IMR-90 (cell line): ENCODE measurements at regions of chr3 and their contacts with region 1.

Region 1: DNA sequence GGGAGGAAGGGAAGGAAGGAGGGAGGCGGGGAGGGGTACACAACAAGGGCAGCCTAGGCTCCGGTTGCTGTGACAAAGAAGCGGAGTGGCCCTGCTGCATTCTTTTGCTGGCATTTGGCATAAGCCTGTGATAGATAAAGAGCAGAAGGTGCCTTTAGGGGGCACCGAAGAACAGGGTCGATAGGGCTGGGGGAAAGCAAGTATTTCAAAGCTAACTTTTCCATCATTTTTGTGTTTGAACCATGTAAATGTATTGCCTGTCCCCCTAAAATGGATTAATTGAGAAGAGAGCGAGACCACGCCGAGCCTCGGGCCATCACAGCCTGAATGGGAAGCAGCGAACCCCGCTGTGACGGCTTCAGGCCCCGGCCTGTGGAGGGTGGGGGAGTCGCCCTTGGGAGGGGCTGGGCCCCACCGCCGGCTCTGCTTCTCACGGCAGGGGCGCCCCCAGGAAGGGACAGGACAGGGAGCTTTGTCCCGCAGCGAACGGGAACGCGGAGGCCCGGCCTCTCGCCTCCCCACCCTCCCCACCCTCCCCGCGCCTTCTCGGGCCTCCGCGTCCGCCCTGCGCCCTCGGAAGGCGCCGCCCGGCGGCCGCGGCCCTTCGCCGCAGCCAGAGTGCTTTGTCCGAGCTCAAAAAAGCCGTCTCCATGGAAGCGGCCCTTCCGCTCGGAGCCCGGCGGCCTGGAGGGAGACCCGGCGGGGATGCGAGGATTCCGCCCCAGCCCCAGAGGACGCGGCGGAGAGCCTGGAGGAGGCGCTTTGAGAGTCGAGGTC is 32.4 kb upstream of the ALDH1L1 start:
- DNase-seq: peak; percentile 12
- ATAC-seq: peak; percentile 69
- H3K4me3 ChIP-seq: peak overlapping the region; percentile 10; the same call in 1 of the 2 replicates
- H3K27ac ChIP-seq: no peak overlapping the region
- H3K4me1 ChIP-seq: peaks cover 7% of the 10 kb centered on the region
- H3K27me3 ChIP-seq: peaks cover 9% of the 10 kb centered on the region; the same call in 1 of the 2 replicates
- CTCF ChIP-seq: 0 out of 2 replicates have a peak, but pooled peaks have one; percentile 15
- POLR2A ChIP-seq: no peak
- RAD21 ChIP-seq: no peak

Region 2: GRCh38 chr3:126197854-126198584 is 14.8 kb before region 1 on chr3:
- CTCF ChIA-PET with region 1: interaction called, 11 read pairs
- POLR2A ChIA-PET with region 1: interaction called, 3 read pairs
- dilution Hi-C with region 1: no loop called
- in situ Hi-C with region 1: no loop called
- intact Hi-C with region 1: no loop called
- DNase-seq: peak; percentile 60
- ATAC-seq: peak; percentile 95
- H3K4me3 ChIP-seq: no peak overlapping the region
- H3K27ac ChIP-seq: no peak overlapping the region
- H3K4me1 ChIP-seq: no peaks in the 10 kb centered on the region
- H3K27me3 ChIP-seq: peaks cover 10% of the 10 kb centered on the region
- CTCF ChIP-seq: peak; percentile 72
- POLR2A ChIP-seq: no peak
- RAD21 ChIP-seq: peak; percentile 70

Region 3: DNA sequence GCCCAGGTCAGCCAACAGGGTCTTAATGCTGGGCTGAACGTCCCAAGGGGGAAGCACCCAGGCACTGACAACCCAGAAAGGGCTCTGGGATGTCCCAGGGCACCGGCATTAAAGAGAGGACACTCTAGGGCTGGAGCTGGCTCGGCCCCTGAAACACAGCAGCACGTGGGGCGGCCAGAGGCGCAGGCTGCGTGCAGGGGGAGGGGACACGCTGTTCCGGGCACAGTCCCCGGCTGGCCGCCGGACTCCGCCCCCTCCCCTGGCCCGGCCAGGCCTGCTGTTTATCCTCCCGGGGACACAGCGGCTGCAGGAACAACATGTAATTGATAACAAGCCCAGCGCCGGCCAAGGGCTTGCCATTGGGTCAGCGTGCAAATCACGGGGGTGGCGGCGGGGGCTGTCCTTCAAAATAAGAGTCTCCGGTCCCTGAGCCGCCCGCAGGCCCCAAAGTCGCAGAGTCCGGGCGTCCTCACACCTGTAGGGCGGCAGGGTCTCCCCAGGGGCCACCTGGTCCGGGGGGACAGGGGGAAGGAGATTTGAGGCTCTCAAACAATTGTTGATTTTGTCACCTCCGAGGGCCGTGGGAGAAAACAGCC is 143.1 kb after region 1 on chr3:
- CTCF ChIA-PET with region 1: no interaction called
- POLR2A ChIA-PET with region 1: no interaction called
- dilution Hi-C with region 1: no loop called
- in situ Hi-C with region 1: no loop called
- intact Hi-C with region 1: loop called (anchors 1 kb)
- DNase-seq: peak; percentile 52
- ATAC-seq: peak; percentile 73
- H3K4me3 ChIP-seq: peak overlapping the region; percentile 33
- H3K27ac ChIP-seq: no peak overlapping the region
- H3K4me1 ChIP-seq: peaks cover 3% of the 10 kb centered on the region; the same call in 1 of the 2 replicates
- H3K27me3 ChIP-seq: peaks cover 28% of the 10 kb centered on the region
- CTCF ChIP-seq: no peak
- POLR2A ChIP-seq: no peak
- RAD21 ChIP-seq: no peak

Region 4: DNA sequence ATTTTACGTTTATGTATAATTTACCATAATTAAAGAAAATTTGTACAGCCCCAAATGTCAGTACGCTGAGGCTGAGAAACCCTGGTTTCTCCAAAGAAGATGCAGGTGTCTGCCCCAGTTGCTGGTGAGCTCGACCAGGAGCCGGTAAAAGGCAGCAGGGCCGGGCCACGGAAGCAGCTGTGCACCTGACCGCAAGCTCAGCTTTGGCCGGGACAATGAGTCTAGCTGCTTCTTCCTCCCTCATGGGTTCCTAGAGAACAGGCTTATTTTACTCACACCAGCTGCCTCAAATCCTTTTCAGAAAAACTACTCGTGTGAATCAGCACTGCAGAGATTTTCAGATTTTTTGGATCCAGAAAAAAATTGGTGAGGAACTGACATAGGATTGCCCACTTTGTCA is 280.9 kb after region 1 on chr3:
- CTCF ChIA-PET with region 1: no interaction called
- POLR2A ChIA-PET with region 1: no interaction called
- dilution Hi-C with region 1: no loop called
- in situ Hi-C with region 1: no loop called
- intact Hi-C with region 1: no loop called
- DNase-seq: no peak
- ATAC-seq: no peak
- H3K4me3 ChIP-seq: no peak overlapping the region
- H3K27ac ChIP-seq: no peak overlapping the region
- H3K4me1 ChIP-seq: no peaks in the 10 kb centered on the region
- H3K27me3 ChIP-seq: peaks cover 33% of the 10 kb centered on the region; the same call in 1 of the 2 replicates
- CTCF ChIP-seq: no peak
- POLR2A ChIP-seq: no peak
- RAD21 ChIP-seq: no peak

Region 5: DNA sequence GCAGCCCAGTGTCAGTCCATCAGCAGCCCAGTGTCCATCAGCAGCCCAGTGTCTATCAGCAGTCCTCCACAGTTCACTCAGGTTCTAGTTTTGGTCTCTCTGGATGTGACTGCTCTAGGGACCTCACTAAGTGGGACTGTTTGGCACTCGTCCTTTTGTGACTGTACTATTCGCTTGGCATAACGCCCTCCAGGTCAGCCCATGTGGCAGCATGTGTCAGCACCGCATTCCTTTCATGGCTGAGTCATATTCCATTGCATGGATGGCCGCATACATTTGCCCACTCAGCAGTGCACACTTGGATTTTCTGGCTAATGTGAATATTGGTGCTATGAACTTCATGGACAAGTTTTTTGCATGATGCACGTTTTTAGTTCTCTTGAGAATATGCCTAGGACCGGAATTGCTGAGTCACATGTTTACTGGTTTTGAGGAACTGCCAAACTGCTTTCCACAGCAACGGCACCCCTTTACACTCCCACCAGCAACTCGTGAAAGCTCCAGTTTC is 327.6 kb after region 1 on chr3:
- CTCF ChIA-PET with region 1: no interaction called
- POLR2A ChIA-PET with region 1: no interaction called
- dilution Hi-C with region 1: no loop called
- in situ Hi-C with region 1: no loop called
- intact Hi-C with region 1: no loop called
- DNase-seq: peak; percentile 93
- ATAC-seq: peak; percentile 89
- H3K4me3 ChIP-seq: no peak overlapping the region
- H3K27ac ChIP-seq: no peak overlapping the region
- H3K4me1 ChIP-seq: peaks cover 6% of the 10 kb centered on the region
- H3K27me3 ChIP-seq: peaks cover 38% of the 10 kb centered on the region
- CTCF ChIP-seq: no peak
- POLR2A ChIP-seq: no peak
- RAD21 ChIP-seq: no peak